ENCODE measurements at regions of chr2 and their contacts with region 1.

Region 1: GRCh38 chr2:113889471-113890252 is at the start of gene ACTR3:
- DNase-seq: peak; percentile 91 to 99 (median 94)

Region 2: GRCh38 chr2:113032737-113033136 is 856.9 kb before region 1 on chr2:
- intact Hi-C with region 1: no loop called
- DNase-seq: no peak

Region 3: GRCh38 chr2:113756355-113757137 is 133.1 kb before region 1 on chr2 and contains the start of gene SLC35F5:
- intact Hi-C with region 1: loop called (anchors 2 kb)
- DNase-seq: peak; percentile 83 to 99 (median 91)

Region 4: GRCh38 chr2:113965644-113966043 is 76.0 kb after region 1 on chr2:
- intact Hi-C with region 1: loop called (anchors 10 kb)
- DNase-seq: no peak

Region 5: DNA sequence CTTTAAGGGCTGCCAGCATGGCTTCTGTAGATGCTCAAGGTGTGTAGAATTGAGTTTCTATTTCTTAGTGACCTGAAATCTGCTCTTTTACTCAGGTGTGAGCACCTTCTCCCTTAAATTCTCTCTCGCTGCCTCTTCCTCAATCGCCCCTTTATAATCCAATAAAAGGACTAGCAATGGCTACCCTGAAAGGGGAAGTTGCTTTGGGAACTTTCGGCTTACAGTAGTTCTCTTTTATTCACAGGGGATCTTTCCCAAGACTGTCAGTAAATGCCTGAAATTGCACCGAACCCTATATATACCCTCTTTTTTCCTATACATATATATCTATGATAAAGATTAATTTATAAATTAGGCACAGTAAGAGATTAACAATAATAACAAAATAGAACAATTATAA is 122.1 kb after region 1 on chr2:
- intact Hi-C with region 1: no loop called
- DNase-seq: no peak

Measured in posterior cingulate gyrus (tissue), 11 donors.